MCF 10A (cell line): ENCODE measurements at regions of chr17 and their contacts with region 1.

Region 1: DNA sequence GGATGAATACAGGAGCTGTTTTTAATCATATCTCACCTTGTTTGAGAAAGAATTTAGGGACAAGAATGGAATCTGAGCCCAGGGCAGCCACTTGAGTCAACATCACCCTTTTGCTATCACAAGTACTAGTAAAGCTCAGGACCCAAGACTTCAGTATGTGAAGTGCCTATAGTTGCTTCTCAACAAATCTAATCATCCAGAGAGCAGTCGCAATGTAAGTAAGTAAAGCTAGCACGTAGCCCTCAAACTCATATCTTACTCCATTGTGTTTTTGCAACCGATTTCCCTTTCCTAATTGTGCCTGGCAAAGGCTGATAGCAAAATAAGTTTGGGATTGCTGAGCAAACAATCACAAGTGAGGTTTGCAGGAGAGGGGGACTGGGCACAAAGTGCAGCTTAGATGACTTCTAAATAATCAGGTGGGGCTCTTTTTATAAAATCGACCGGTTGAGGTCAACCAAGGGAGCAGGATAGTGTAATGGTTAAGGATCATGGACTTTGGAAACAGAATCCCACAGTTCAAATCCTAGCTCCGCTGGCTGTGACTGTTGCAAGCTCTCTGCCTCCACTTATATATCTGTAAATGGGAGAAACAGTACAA is 13.0 kb downstream of the TOB1 start:
- DNase-seq: no peak
- H3K4me3 Mint-ChIP-seq: no peak overlapping the region
- H3K27ac Mint-ChIP-seq: peak overlapping the region; percentile 90
- H3K4me1 Mint-ChIP-seq: peaks cover 15% of the 10 kb centered on the region
- H3K27me3 Mint-ChIP-seq: no peaks in the 10 kb centered on the region
- CTCF ChIP-seq: no peak

Region 2: GRCh38 chr17:50560185-50560824 is 292.8 kb before region 1 on chr17 and contains the start of gene CACNA1G:
- CTCF ChIA-PET with region 1: no interaction called
- POLR2A ChIA-PET with region 1: no interaction called
- intact Hi-C with region 1: no loop called
- DNase-seq: peak; percentile 75
- H3K4me3 Mint-ChIP-seq: peak within 1 kb of the TSS; percentile 39
- H3K27ac Mint-ChIP-seq: no peak within 1 kb of the TSS
- H3K4me1 Mint-ChIP-seq: no peaks in the 10 kb centered on the region
- H3K27me3 Mint-ChIP-seq: peaks cover 37% of the 10 kb centered on the region
- CTCF ChIP-seq: no peak
- total RNA-seq, gene CACNA1G: not detected in 2 replicates

Region 3: GRCh38 chr17:50841949-50842354 is 11.2 kb before region 1 on chr17:
- CTCF ChIA-PET with region 1: interaction called, 38 read pairs
- POLR2A ChIA-PET with region 1: interaction called, 4 read pairs
- intact Hi-C with region 1: no loop called
- DNase-seq: peak; percentile 74
- H3K4me3 Mint-ChIP-seq: no peak overlapping the region
- H3K27ac Mint-ChIP-seq: no peak overlapping the region
- H3K4me1 Mint-ChIP-seq: peaks cover 14% of the 10 kb centered on the region
- H3K27me3 Mint-ChIP-seq: no peaks in the 10 kb centered on the region
- CTCF ChIP-seq: peak; percentile 84

Region 4: GRCh38 chr17:50931144-50931908 is 78.2 kb after region 1 on chr17:
- CTCF ChIA-PET with region 1: interaction called, 23 read pairs
- POLR2A ChIA-PET with region 1: interaction called, 8 read pairs
- intact Hi-C with region 1: no loop called
- DNase-seq: peak; percentile 78
- H3K4me3 Mint-ChIP-seq: peak overlapping the region; percentile 71
- H3K27ac Mint-ChIP-seq: peak overlapping the region; percentile 32
- H3K4me1 Mint-ChIP-seq: peaks cover 45% of the 10 kb centered on the region
- H3K27me3 Mint-ChIP-seq: no peaks in the 10 kb centered on the region
- CTCF ChIP-seq: no peak

Region 5: DNA sequence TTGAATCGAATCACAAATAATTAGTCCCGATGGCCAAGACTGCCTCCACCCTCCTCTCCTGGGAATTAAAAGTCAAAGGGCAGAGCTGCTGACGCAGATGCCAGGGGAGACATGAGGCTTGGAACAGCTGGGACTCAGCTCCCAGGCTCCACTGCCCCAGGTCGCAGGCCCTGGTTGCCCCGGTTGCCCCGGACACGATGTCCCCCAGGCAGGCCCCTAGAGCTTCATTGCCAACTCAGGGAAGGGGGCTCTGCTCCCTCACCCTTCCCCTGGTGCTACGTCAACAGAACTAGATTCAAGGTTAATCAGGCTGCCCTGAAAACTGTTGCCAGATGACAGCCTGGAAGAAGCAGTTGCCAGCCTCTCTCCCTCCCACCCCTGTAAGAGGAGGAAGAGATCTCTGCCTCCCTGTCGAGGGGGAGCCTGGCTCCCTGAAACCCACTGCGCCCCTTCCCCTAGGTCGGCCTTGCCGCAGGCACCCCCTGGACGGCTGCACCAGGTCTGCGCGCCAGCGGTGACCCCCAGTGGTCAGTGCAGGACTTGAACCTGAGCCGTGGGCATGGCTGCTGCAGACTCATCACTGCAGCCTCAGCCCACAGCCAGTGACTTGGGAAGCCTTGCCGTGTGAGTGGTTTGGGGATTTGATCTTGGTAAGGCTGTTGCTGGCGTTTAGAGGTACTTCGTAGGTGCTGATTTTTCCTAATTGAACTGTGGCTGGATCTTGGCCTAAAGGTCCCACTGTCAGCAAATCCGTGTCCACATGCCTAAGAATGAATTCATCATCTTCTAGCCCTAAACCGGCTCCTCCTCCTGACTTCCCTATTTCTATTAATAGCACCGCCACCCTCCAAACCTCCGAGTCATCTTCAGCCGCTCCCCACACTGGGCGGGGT is 97.1 kb after region 1 on chr17:
- CTCF ChIA-PET with region 1: interaction called, 429 read pairs
- POLR2A ChIA-PET with region 1: interaction called, 473 read pairs
- intact Hi-C with region 1: loop called (anchors 1 kb)
- DNase-seq: peak; percentile 92
- H3K4me3 Mint-ChIP-seq: peak overlapping the region; percentile 42
- H3K27ac Mint-ChIP-seq: peak overlapping the region; percentile 67
- H3K4me1 Mint-ChIP-seq: peaks cover 49% of the 10 kb centered on the region
- H3K27me3 Mint-ChIP-seq: no peaks in the 10 kb centered on the region
- CTCF ChIP-seq: peak; percentile 89

Region 6: DNA sequence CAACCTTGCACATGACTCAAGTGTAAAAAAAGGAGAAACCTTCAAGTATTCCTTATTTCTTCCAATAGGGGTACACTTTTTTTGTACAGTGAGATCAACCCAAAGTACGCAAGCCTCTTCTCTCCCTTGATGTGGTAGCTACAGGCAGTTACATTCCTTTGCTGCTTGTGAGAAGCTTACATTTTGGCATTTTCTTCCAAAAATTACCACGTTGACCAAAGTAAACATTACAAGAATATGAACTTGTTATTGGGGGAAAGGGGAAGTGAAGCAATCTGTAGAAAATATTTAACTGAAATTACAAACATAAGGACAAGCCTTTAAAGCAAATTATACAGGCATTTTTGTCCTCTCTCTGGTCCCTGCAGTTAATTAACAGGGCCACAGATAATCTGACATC is 110.0 kb after region 1 on chr17:
- CTCF ChIA-PET with region 1: interaction called, 429 read pairs
- POLR2A ChIA-PET with region 1: interaction called, 7 read pairs
- intact Hi-C with region 1: no loop called
- DNase-seq: no peak
- H3K4me3 Mint-ChIP-seq: no peak overlapping the region
- H3K27ac Mint-ChIP-seq: no peak overlapping the region
- H3K4me1 Mint-ChIP-seq: no peaks in the 10 kb centered on the region
- H3K27me3 Mint-ChIP-seq: no peaks in the 10 kb centered on the region
- CTCF ChIP-seq: no peak

Region 7: DNA sequence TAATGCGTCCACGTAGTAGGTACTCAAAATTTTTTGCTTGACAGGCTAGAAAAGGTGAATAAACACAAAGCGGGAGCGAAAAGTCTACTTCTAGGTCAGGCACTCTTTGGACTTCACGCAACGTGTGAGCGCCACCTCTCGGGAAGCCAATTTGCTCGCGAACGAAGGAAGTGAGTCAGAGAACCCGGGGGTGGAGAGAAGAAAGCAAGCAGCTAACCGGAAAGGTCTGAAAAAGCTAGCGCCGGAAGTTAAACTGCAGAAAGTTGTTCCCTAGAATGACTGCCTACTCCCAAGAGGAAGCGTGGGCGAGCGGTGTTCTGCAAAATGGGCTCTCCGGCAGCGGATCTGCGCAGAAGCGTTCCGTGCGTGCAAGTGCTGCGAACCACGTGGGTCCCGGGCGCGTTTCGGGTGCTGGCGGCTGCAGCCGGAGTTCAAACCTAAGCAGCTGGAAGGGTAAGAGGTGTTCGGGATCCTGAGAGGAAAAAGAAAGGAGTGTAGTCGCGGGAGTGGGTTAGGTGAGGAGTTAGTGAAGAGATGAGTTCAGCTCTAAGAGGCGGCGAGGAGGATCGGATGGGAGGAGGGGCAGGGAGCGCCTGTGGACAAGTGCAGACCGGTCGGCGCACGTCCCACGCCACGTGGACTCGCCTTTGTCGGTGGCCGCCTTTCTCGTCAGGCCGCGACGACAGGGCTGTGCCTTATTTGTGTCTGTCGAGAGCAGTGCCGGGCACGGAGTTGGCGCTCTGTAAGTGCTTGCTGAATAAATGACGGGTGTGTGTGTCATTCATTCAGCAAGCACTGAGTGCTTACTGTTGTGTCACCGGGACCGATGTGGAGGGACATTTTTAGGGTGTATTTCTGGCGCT is 300.3 kb after region 1 on chr17 and contains the start of gene NME1:
- CTCF ChIA-PET with region 1: interaction called, 4 read pairs
- POLR2A ChIA-PET with region 1: interaction called, 3 read pairs
- intact Hi-C with region 1: loop called (anchors 1 kb)
- DNase-seq: peak; percentile 99
- H3K4me3 Mint-ChIP-seq: no peak within 1 kb of the TSS
- H3K27ac Mint-ChIP-seq: no peak within 1 kb of the TSS
- H3K4me1 Mint-ChIP-seq: no peaks in the 10 kb centered on the region
- H3K27me3 Mint-ChIP-seq: no peaks in the 10 kb centered on the region
- CTCF ChIP-seq: peak; percentile 70
- total RNA-seq, gene NME1: 268 and 324 TPM in 2 replicates